ENCODE measurements at regions of chr10 and their contacts with region 1.

Region 1: DNA sequence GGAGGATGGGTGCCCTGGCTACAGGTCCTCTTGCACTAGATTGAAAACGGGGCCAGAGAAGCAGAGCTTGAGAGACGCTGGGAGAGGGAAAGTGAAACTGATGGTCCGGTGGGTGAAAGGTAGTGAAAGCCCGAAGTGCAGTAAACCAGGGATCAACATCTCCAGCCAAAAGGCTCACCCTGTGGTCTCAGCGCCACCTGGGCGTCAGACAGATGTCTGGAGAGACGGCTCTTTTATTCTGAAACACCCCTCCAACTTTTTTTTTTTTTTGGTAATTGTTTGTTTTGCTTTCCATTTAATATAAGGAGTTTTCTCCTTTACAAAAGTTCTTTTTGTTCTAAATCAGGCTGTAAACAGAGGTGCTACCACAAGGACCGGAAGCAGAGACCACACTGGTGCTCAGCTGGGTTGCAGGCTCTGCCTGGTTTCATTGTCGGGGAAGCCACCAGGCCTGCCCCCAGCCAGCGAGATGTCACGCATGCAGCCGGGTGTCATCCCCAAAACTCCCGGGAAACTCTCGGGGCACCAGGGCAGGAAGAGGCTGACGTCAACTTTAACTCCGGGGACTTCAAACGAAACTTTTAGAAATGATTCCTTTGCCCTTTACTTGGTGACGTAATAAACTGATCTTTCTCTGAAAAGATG is 11.2 kb downstream of the IL2RA start:
- DNase-seq: peak; percentile 79
- ATAC-seq: peak; percentile 66
- H3K4me3 Mint-ChIP-seq: peak overlapping the region; percentile 81
- H3K27ac Mint-ChIP-seq: peak overlapping the region; percentile 97
- H3K4me1 Mint-ChIP-seq: peaks cover 91% of the 10 kb centered on the region
- H3K27me3 Mint-ChIP-seq: no peaks in the 10 kb centered on the region
- CTCF ChIP-seq: no peak

Region 2: DNA sequence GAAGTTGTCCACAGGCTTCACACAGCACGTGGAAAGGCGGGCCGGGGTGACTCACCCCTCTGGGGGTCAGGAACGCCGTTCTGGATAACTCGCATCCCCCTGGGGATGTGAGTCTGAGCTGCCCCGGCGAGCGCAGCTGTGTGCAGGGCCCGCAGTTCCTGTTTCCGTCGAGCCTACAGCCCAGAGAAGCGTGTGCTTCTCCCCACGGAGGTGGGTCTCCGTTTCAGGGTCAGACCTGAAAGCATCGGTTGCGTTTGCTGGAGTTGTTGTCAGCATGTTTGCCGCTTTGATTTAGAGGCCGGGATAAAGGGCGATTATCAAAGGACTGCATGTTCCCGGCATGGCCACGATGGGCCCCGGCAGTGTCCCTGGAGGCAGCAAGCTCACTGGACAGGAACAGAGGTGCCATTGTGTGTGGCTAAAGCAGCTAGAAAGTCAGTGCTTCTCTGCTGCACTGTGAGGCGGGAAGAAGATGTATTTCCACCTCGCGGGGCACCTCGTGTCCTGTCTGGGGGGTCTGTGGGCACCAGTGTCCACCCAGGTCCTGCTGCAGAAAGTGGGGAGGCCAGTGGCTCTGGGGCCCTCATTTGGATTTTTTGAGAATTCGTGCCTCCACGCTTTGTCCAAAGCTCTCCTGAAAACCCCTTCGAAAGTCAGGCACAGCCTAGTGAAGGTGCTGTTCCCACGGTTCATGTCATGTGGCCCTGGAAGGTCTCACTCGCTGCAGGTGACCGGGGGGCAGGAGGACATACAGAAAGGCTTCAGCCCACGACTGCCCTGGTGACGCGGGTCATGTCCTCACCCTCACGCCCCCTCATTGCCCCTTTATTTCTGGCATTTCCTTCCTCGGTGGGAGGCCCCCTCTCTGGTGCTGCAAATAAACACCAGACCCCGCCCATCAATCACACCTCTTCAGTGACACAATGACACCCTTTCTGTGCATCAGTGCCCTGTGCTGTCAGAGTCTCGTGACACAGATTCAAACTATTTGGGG is 210.3 kb before region 1 on chr10:
- CTCF ChIA-PET with region 1: interaction called, 4 read pairs
- POLR2A ChIA-PET with region 1: interaction called, 5 read pairs
- intact Hi-C with region 1: loop called (anchors 2 kb)
- DNase-seq: peak; percentile 78
- ATAC-seq: peak; percentile 83
- H3K4me3 Mint-ChIP-seq: peak overlapping the region; percentile 84
- H3K27ac Mint-ChIP-seq: peak overlapping the region; percentile 98
- H3K4me1 Mint-ChIP-seq: peaks cover 79% of the 10 kb centered on the region
- H3K27me3 Mint-ChIP-seq: no peaks in the 10 kb centered on the region
- CTCF ChIP-seq: no peak

Region 3: DNA sequence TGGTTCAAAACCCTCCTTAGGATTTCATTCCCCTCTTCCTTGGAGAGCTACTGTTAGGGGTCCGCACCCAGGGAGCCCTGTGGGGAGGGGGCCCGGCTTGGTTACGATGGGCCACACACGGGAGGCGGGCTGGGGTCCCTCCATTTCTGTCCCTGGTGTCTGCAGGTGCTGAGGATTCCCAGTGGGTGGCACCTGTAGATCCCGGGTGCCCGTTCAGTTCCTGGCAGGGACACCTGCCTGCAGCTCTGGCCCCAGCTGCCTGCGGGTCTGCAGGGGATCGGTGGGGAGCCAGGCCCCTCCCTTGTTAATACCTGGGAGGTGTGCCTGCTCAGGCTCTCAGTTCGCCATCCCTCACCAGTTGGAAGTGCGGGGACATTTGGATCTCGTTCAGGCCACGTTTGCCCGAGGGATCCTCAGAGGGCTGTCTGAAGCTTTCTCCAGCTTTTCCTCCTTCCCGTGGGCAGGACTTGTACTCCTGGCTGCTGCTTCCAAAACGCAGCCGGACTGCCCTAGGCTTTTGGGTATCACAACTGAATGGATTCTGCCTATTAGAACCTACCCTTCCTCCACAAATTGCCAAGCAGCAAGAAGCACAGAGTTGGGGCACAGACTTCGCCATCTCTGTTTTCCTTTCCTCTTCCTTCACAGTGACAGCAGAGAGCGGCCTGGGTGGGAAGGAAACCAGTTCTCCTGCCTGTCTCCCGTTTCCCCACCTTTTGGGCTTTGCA is 51.3 kb before region 1 on chr10:
- CTCF ChIA-PET with region 1: no interaction called
- POLR2A ChIA-PET with region 1: no interaction called
- intact Hi-C with region 1: no loop called
- DNase-seq: no peak
- ATAC-seq: no peak
- H3K4me3 Mint-ChIP-seq: no peak overlapping the region
- H3K27ac Mint-ChIP-seq: no peak overlapping the region
- H3K4me1 Mint-ChIP-seq: no peaks in the 10 kb centered on the region
- H3K27me3 Mint-ChIP-seq: peaks cover 5% of the 10 kb centered on the region
- CTCF ChIP-seq: no peak

Region 4: DNA sequence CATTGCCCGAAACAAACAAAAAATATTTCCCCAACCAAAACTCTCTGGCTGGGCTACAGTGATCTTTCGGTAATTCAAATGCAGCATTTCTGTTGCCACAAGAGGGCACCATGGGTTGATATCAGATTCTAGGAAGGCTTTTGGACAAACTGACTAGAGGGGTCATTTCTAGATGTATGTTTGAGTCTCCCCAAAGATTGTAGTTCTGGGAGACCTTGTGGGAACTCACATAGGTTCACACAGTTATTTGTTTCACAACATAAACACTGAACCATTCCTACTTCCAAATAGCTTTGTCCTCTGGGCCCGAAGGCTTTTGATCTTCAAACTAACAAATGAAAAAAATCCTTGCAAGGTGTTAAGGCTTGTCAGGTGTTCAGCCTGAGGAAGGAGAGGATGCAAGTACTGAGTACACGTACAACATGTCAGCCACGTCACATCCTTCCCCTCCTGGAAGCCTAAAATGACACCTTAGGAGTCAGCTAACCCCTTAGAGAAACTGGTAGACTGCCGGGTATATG is 36.6 kb before region 1 on chr10:
- CTCF ChIA-PET with region 1: interaction called, 43 read pairs
- POLR2A ChIA-PET with region 1: interaction called, 21 read pairs
- intact Hi-C with region 1: loop called (anchors 1 kb)
- DNase-seq: no peak
- ATAC-seq: peak; percentile 66
- H3K4me3 Mint-ChIP-seq: no peak overlapping the region
- H3K27ac Mint-ChIP-seq: peak overlapping the region; percentile 78
- H3K4me1 Mint-ChIP-seq: peaks cover 22% of the 10 kb centered on the region
- H3K27me3 Mint-ChIP-seq: no peaks in the 10 kb centered on the region
- CTCF ChIP-seq: no peak

Region 5: GRCh38 chr10:6068422-6068821 is 17.5 kb after region 1 on chr10:
- CTCF ChIA-PET with region 1: interaction called, 8 read pairs
- POLR2A ChIA-PET with region 1: interaction called, 339 read pairs
- intact Hi-C with region 1: loop called (anchors 1 kb)
- DNase-seq: no peak
- ATAC-seq: peak; percentile 72
- H3K4me3 Mint-ChIP-seq: peak overlapping the region; percentile 72
- H3K27ac Mint-ChIP-seq: peak overlapping the region; percentile 97
- H3K4me1 Mint-ChIP-seq: peaks cover 93% of the 10 kb centered on the region
- H3K27me3 Mint-ChIP-seq: no peaks in the 10 kb centered on the region
- CTCF ChIP-seq: no peak

Region 6: GRCh38 chr10:6088721-6089390 is 37.9 kb after region 1 on chr10 and contains the start of gene RBM17:
- CTCF ChIA-PET with region 1: interaction called, 69 read pairs
- POLR2A ChIA-PET with region 1: interaction called, 146 read pairs
- intact Hi-C with region 1: loop called (anchors 1 kb)
- DNase-seq: peak; percentile 99
- ATAC-seq: peak; percentile 85
- H3K4me3 Mint-ChIP-seq: peak within 1 kb of the TSS; percentile 97
- H3K27ac Mint-ChIP-seq: peak within 1 kb of the TSS; percentile 87
- H3K4me1 Mint-ChIP-seq: peaks cover 69% of the 10 kb centered on the region
- H3K27me3 Mint-ChIP-seq: no peaks in the 10 kb centered on the region
- CTCF ChIP-seq: peak; percentile 99
- total RNA-seq, gene RBM17: 207 and 209 TPM in 2 replicates

Region 7: DNA sequence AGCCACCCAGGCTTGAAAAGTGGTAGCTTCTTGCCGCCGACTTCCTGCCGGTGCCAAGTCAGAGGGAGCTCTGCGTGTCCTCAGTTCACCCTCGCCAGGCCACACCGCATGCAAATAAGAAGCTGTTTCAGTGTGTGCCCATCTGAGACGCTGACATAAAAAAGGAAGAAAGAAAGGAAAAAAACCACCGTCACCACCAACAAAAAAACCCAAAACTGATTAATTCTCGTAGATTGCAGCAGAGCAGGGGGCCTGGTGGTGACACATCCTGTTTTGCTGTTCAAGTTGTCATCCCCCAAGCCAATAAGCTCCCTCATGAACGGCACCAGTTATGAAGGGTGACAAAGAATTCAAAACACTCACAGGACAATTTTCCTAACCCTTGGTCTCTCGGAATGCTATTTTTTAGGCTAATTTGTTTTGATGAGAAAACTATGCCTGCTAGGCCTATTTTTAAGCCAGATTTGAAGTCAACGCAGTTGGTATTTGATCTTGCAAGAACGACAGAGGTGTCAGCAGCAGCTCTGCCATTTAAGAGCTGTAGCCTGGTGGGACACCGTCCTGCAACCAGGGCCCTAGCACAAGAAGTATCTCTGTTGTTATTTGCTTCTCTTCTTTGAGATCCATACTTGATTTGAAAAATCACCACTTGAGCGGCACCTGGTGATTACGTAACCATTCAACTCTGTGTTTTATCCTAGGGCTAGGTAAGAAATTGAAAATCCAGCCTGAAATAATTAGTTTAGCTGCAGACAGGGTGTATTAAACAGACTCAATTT is 297.4 kb after region 1 on chr10:
- CTCF ChIA-PET with region 1: no interaction called
- POLR2A ChIA-PET with region 1: interaction called, 39 read pairs
- intact Hi-C with region 1: loop called (anchors 1 kb)
- DNase-seq: peak; percentile 65
- ATAC-seq: peak; percentile 91
- H3K4me3 Mint-ChIP-seq: peak overlapping the region; percentile 80
- H3K27ac Mint-ChIP-seq: peak overlapping the region; percentile 97
- H3K4me1 Mint-ChIP-seq: peaks cover 57% of the 10 kb centered on the region
- H3K27me3 Mint-ChIP-seq: no peaks in the 10 kb centered on the region
- CTCF ChIP-seq: no peak

Region 8: GRCh38 chr10:6667679-6668270 is 616.9 kb after region 1 on chr10:
- CTCF ChIA-PET with region 1: no interaction called
- POLR2A ChIA-PET with region 1: no interaction called
- intact Hi-C with region 1: no loop called
- DNase-seq: no peak
- ATAC-seq: no peak
- H3K4me3 Mint-ChIP-seq: no peak overlapping the region
- H3K27ac Mint-ChIP-seq: no peak overlapping the region
- H3K4me1 Mint-ChIP-seq: no peaks in the 10 kb centered on the region
- H3K27me3 Mint-ChIP-seq: peaks cover 8% of the 10 kb centered on the region
- CTCF ChIP-seq: no peak

Region 9: DNA sequence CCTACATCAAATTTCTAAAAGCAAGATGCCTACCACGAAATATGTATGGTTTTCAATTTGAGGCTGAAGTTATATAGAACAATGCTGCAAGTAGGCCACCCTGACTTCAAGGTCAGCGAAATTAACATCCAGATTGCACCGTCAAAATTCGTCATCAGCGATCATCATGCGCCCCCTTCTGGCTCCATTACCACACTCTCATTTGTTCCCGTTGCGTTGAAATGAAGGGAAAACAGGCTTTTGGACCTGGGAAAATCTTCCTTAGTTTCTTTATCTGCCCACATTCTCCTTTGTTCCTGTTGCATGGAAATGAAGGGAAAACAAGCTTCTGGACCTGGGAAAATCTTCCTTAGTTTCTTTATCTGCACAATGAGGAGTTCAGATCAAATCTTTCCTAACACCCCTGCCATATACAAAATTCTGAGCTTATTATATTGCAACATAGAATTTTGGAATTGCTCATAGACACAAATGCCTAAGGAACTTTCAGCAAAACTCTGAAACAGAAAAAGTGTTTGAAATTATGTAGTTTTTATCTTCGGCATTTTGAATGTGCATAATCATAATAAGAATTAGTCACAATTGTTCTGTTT is 627.4 kb after region 1 on chr10:
- CTCF ChIA-PET with region 1: no interaction called
- POLR2A ChIA-PET with region 1: no interaction called
- intact Hi-C with region 1: no loop called
- DNase-seq: no peak
- ATAC-seq: peak; percentile 28
- H3K4me3 Mint-ChIP-seq: no peak overlapping the region
- H3K27ac Mint-ChIP-seq: no peak overlapping the region
- H3K4me1 Mint-ChIP-seq: peaks cover 3% of the 10 kb centered on the region
- H3K27me3 Mint-ChIP-seq: peaks cover 19% of the 10 kb centered on the region
- CTCF ChIP-seq: no peak